ENCODE measurements at regions of chr5 and their contacts with region 1.

Region 1: GRCh38 chr5:126455728-126456127 is 32.5 kb downstream of the GRAMD2B start:
- DNase-seq: no peak
- ATAC-seq: no peak
- H3K4me3 ChIP-seq: no peak overlapping the region
- H3K27ac ChIP-seq: no peak overlapping the region
- H3K4me1 ChIP-seq: no peaks in the 10 kb centered on the region
- H3K27me3 ChIP-seq: no peaks in the 10 kb centered on the region
- CTCF ChIP-seq: no peak

Region 2: GRCh38 chr5:126422989-126423788 is 32.5 kb before region 1 on chr5 and contains the start of gene GRAMD2B:
- intact Hi-C with region 1: loop called in 1 of 2 experiments (anchors 1 kb)
- DNase-seq: peak; percentile 82 to 85
- ATAC-seq: peak; percentile 85 to 96 (median 94)
- H3K4me3 ChIP-seq: peak within 1 kb of the TSS; percentile 72
- H3K27ac ChIP-seq: peak within 1 kb of the TSS; percentile 82
- H3K4me1 ChIP-seq: no peaks in the 10 kb centered on the region
- H3K27me3 ChIP-seq: no peaks in the 10 kb centered on the region
- CTCF ChIP-seq: no peak
- total RNA-seq, gene GRAMD2B: 2.8 to 8.0 (median 5.4) TPM